Caco-2 (cell line): ENCODE measurements at regions of chr3 and their contacts with region 1.

Region 1: DNA sequence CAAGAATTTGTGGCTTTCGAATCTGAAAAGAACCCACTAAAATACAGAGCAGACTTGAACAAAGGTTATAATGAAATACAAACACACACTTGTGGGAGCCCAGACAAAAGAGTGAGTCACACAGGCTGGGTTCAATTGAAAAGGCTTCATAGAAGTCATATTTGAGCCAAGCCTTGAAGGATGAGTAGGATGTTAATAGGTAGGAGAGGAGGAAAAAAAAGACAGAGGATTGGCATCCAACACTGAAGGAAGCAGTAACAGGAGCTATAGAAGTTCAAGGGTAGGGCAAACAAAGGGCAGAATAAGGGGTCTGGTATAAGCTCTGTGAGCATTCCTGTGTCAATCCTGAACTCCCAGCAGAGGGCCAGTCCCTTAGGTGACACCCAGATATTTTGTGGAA is 325.4 kb downstream of the FOXP1 start:
- DNase-seq: no peak
- H3K4me3 ChIP-seq: no peak overlapping the region
- H3K4me3 Mint-ChIP-seq: peak overlapping the region; percentile 13
- H3K27ac Mint-ChIP-seq: peak overlapping the region; percentile 77
- H3K4me1 ChIP-seq: peaks cover 67% of the 10 kb centered on the region
- H3K4me1 Mint-ChIP-seq: peaks cover 34% of the 10 kb centered on the region
- H3K27me3 ChIP-seq: no peaks in the 10 kb centered on the region
- H3K27me3 Mint-ChIP-seq: no peaks in the 10 kb centered on the region
- CTCF ChIP-seq: no peak

Region 2: GRCh38 chr3:71064288-71064955 is 193.7 kb before region 1 on chr3:
- CTCF ChIA-PET with region 1: no interaction called
- POLR2A ChIA-PET with region 1: no interaction called
- intact Hi-C with region 1: loop called (anchors 2 kb)
- DNase-seq: peak; percentile 56 to 70
- H3K4me3 ChIP-seq: peak overlapping the region; percentile 58
- H3K4me3 Mint-ChIP-seq: no peak overlapping the region
- H3K27ac Mint-ChIP-seq: no peak overlapping the region
- H3K4me1 ChIP-seq: peaks cover 55% of the 10 kb centered on the region
- H3K4me1 Mint-ChIP-seq: peaks cover 44% of the 10 kb centered on the region
- H3K27me3 ChIP-seq: no peaks in the 10 kb centered on the region
- H3K27me3 Mint-ChIP-seq: no peaks in the 10 kb centered on the region
- CTCF ChIP-seq: no peak

Region 3: GRCh38 chr3:71149959-71150954 is 107.9 kb before region 1 on chr3:
- CTCF ChIA-PET with region 1: interaction called, 3 read pairs
- POLR2A ChIA-PET with region 1: no interaction called
- intact Hi-C with region 1: loop called (anchors 1 kb)
- DNase-seq: no peak
- H3K4me3 ChIP-seq: no peak overlapping the region
- H3K4me3 Mint-ChIP-seq: no peak overlapping the region
- H3K27ac Mint-ChIP-seq: no peak overlapping the region
- H3K4me1 ChIP-seq: peaks cover 59% of the 10 kb centered on the region
- H3K4me1 Mint-ChIP-seq: peaks cover 49% of the 10 kb centered on the region
- H3K27me3 ChIP-seq: no peaks in the 10 kb centered on the region
- H3K27me3 Mint-ChIP-seq: no peaks in the 10 kb centered on the region
- CTCF ChIP-seq: no peak

Region 4: GRCh38 chr3:71191031-71191482 is 67.1 kb before region 1 on chr3:
- CTCF ChIA-PET with region 1: interaction called, 5 read pairs
- POLR2A ChIA-PET with region 1: no interaction called
- intact Hi-C with region 1: loop called (anchors 1 kb)
- DNase-seq: peak; percentile 75 to 77
- H3K4me3 ChIP-seq: no peak overlapping the region
- H3K4me3 Mint-ChIP-seq: no peak overlapping the region
- H3K27ac Mint-ChIP-seq: peak overlapping the region; percentile 74
- H3K4me1 ChIP-seq: peaks cover 59% of the 10 kb centered on the region
- H3K4me1 Mint-ChIP-seq: peaks cover 52% of the 10 kb centered on the region
- H3K27me3 ChIP-seq: no peaks in the 10 kb centered on the region
- H3K27me3 Mint-ChIP-seq: no peaks in the 10 kb centered on the region
- CTCF ChIP-seq: peak in 1 of 2 experiments; percentile 5

Region 5: GRCh38 chr3:71247221-71247976 is 10.7 kb before region 1 on chr3:
- CTCF ChIA-PET with region 1: interaction called, 5 read pairs
- POLR2A ChIA-PET with region 1: interaction called, 12 read pairs
- intact Hi-C with region 1: loop called (anchors 1 kb)
- DNase-seq: peak; percentile 75 to 88
- H3K4me3 ChIP-seq: no peak overlapping the region
- H3K4me3 Mint-ChIP-seq: peak overlapping the region; percentile 24
- H3K27ac Mint-ChIP-seq: peak overlapping the region; percentile 83
- H3K4me1 ChIP-seq: peaks cover 69% of the 10 kb centered on the region
- H3K4me1 Mint-ChIP-seq: peaks cover 57% of the 10 kb centered on the region
- H3K27me3 ChIP-seq: no peaks in the 10 kb centered on the region
- H3K27me3 Mint-ChIP-seq: no peaks in the 10 kb centered on the region
- CTCF ChIP-seq: no peak

Region 6: DNA sequence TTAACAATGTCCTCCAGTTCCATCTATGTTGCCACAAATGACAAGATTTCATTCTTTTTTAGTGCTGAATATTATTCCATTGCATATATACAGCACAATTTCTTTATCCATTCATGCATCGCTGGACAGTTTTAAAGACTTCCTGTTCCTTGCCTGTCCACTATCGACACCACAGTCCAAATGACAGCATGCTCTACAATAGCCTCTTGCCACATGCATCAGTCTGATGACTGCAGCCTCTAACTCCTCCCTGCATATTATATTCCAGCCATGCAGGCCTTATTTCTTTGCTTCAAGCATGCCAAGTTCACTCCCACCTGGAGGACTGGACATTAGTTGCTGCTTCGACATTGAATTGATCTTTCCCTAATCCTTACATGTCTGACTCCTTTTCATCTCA is 19.2 kb after region 1 on chr3:
- CTCF ChIA-PET with region 1: no interaction called
- POLR2A ChIA-PET with region 1: no interaction called
- intact Hi-C with region 1: no loop called
- DNase-seq: no peak
- H3K4me3 ChIP-seq: no peak overlapping the region
- H3K4me3 Mint-ChIP-seq: no peak overlapping the region
- H3K27ac Mint-ChIP-seq: no peak overlapping the region
- H3K4me1 ChIP-seq: peaks cover 8% of the 10 kb centered on the region; the same call in 1 of the 2 replicates
- H3K4me1 Mint-ChIP-seq: peaks cover 26% of the 10 kb centered on the region
- H3K27me3 ChIP-seq: no peaks in the 10 kb centered on the region
- H3K27me3 Mint-ChIP-seq: no peaks in the 10 kb centered on the region
- CTCF ChIP-seq: no peak

Region 7: GRCh38 chr3:71305231-71306206 is 47.4 kb after region 1 on chr3:
- CTCF ChIA-PET with region 1: no interaction called
- POLR2A ChIA-PET with region 1: no interaction called
- intact Hi-C with region 1: loop called (anchors 2 kb)
- DNase-seq: peak; percentile 36 to 41
- H3K4me3 ChIP-seq: peak overlapping the region; percentile 47
- H3K4me3 Mint-ChIP-seq: peak overlapping the region; percentile 93
- H3K27ac Mint-ChIP-seq: peak overlapping the region; percentile 91
- H3K4me1 ChIP-seq: peaks cover 26% of the 10 kb centered on the region
- H3K4me1 Mint-ChIP-seq: peaks cover 36% of the 10 kb centered on the region
- H3K27me3 ChIP-seq: no peaks in the 10 kb centered on the region
- H3K27me3 Mint-ChIP-seq: no peaks in the 10 kb centered on the region
- CTCF ChIP-seq: no peak

Region 8: GRCh38 chr3:71512000-71512399 is 253.9 kb after region 1 on chr3:
- CTCF ChIA-PET with region 1: no interaction called
- POLR2A ChIA-PET with region 1: no interaction called
- intact Hi-C with region 1: loop called (anchors 10 kb)
- DNase-seq: peak in 1 of 2 experiments; percentile 21
- H3K4me3 ChIP-seq: no peak overlapping the region
- H3K4me3 Mint-ChIP-seq: no peak overlapping the region
- H3K27ac Mint-ChIP-seq: no peak overlapping the region
- H3K4me1 ChIP-seq: peaks cover 9% of the 10 kb centered on the region
- H3K4me1 Mint-ChIP-seq: peaks cover 5% of the 10 kb centered on the region
- H3K27me3 ChIP-seq: no peaks in the 10 kb centered on the region
- H3K27me3 Mint-ChIP-seq: no peaks in the 10 kb centered on the region
- CTCF ChIP-seq: no peak